Dendritic cell treated with granulocyte-macrophage colony-stimulating factor and Interleukin-4, amounts not matched to agents 40 ng/mL and 50 ng/mL, for 4 days (primary cell): ENCODE measurements at regions of chr22 and their contacts with region 1.

Region 1: DNA sequence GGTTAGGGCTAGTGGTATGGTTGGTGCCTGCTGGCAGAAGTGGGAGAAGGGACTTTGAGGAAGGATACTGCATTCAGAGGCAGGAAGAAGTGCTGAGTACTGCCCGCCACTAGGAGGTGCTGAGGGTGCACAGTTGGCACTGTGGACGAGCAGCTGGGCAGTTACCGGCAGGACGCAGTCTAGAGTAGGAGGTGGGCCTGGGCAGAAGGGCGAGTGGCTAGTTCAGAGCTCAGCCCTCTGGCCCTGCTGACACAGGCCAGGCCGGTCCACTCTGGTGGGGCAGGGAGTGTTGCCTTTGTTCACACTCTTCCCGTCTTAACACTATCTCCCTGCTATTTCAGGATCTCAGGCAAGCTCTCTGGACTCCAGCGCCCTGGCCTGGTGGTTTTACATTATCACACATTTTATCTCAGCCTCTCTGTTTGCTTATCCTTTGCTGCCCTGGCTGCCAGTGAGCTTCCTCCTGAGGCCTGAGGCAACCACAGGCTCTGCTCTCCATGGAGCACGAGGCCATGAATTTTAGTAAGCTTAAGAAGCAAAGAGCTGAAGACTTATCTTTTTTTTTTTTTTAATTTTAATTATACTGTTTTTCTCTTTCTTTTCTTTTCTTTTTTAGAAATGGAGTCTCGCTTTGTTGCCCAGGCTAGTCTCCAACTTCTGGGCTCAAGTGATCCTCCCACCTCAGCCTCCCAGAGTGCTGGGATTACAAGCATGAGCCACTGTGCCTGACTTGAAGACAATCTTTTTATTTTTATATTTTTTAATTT is 26.9 kb downstream of the SNAP29 start:
- H3K4me3 Mint-ChIP-seq: no peak overlapping the region
- H3K27ac Mint-ChIP-seq: peak overlapping the region; percentile 69
- H3K4me1 Mint-ChIP-seq: peaks cover 11% of the 10 kb centered on the region
- H3K27me3 Mint-ChIP-seq: no peaks in the 10 kb centered on the region

Region 2: DNA sequence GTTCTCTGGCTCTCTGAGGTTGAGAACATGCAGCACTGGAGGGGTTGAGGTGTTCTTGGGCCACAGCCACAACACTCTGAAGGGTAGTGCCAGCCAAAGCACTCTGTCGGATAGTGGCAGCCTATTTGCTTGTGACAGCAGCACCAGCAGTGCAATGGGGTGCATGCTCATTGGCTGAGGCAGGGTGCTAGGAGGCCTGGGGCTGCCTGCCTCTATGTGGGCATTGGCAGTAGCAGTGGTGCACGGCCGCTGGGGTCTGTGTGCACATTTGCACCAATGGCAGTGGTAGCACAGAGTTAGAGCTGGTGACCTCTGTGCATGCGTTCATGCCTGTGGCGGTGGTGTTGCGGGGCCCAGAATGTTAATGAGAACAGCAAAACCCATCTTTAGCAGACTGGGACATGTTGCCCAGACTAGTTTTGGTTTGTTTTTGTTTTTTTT is 52.5 kb before region 1 on chr22:
- intact Hi-C with region 1: no loop called
- H3K4me3 Mint-ChIP-seq: no peak overlapping the region
- H3K27ac Mint-ChIP-seq: no peak overlapping the region
- H3K4me1 Mint-ChIP-seq: peaks cover 17% of the 10 kb centered on the region
- H3K27me3 Mint-ChIP-seq: no peaks in the 10 kb centered on the region

Region 3: DNA sequence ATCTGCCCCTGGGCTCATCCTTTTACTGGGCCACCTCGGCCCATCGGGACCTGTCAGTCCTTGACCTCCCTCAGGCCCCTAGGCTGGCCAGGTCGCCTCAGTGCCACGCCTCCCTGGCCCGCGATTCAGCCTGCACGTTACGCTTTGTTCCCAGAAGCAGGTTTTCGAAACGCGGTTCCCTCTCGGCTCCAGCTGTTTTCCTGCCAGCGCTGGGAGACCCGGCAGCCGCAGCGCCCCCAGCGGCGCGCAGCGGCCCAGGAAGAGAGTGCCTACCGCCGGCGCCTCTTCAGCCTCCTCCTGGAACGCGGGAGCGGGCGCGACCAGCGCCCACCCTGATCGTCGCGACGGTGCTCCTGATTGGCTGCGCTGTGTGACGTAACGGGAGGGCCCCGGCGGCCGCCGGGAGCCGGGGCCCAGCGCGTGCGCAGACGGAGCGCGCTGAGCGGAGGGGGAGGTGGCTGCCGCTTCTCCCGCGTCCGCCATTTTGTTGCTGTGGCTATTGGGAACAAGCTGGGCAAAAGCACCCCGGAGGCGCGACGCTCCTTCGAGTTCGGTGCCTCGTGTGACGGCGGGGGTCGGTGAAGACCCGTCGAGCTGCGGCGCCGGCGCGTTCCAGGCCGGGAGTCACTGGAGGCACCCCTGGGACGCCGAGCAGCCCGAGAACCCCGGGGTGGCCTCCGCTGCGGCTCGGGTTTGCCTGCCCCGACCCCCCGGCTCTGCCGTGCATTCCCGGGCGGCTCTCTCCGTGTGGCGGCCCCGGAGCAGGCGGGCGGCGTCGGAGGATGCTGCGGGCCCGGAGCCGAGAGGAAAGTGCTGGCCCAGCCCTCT is 31.5 kb after region 1 on chr22 and contains the start of gene CRKL:
- intact Hi-C with region 1: loop called (anchors 2 kb)
- H3K4me3 Mint-ChIP-seq: peak within 1 kb of the TSS; percentile 97
- H3K27ac Mint-ChIP-seq: peak within 1 kb of the TSS; percentile 83
- H3K4me1 Mint-ChIP-seq: peaks cover 43% of the 10 kb centered on the region
- H3K27me3 Mint-ChIP-seq: no peaks in the 10 kb centered on the region

Region 4: DNA sequence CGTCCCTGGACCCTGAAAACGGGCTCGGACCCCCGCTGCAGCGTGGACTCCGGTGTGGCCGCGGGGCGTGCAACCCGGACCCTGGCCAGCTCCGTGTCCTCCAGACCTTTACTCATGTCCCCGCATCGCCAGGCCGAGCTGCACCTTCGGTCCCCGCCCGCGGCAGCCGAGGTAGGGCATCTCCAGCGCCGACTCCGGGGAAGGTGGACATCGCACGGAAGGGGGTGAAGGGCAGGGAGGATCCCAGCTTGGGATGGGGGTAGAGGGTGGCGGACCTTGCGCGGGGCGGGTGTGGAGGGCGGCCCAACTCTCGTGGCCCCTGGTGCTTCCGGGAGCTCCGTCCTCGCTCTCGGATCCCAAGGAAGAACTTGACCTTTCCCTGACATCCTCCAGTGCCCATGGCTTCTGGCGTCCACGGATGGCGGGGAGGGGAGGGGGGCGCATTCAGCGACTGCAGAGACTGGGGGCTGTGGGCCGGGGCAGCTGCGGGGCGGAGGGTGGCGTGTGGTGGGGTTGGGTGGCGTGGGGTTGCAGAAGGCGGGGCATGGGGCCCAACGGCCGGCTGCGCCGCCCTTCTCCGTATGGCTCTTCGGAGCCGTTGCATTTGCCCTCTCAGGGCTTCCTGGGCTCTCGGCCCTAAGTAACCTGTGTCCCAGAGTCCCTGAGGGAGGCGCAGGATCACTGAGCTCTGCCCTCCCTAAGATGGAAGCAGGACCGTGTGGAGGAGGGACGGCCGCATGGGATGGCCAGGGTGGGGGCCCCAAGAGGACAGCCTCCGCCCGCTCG is 71.8 kb after region 1 on chr22:
- intact Hi-C with region 1: loop called (anchors 5 kb)
- H3K4me3 Mint-ChIP-seq: peak overlapping the region; percentile 92
- H3K27ac Mint-ChIP-seq: peak overlapping the region; percentile 92
- H3K4me1 Mint-ChIP-seq: peaks cover 45% of the 10 kb centered on the region
- H3K27me3 Mint-ChIP-seq: no peaks in the 10 kb centered on the region

Region 5: DNA sequence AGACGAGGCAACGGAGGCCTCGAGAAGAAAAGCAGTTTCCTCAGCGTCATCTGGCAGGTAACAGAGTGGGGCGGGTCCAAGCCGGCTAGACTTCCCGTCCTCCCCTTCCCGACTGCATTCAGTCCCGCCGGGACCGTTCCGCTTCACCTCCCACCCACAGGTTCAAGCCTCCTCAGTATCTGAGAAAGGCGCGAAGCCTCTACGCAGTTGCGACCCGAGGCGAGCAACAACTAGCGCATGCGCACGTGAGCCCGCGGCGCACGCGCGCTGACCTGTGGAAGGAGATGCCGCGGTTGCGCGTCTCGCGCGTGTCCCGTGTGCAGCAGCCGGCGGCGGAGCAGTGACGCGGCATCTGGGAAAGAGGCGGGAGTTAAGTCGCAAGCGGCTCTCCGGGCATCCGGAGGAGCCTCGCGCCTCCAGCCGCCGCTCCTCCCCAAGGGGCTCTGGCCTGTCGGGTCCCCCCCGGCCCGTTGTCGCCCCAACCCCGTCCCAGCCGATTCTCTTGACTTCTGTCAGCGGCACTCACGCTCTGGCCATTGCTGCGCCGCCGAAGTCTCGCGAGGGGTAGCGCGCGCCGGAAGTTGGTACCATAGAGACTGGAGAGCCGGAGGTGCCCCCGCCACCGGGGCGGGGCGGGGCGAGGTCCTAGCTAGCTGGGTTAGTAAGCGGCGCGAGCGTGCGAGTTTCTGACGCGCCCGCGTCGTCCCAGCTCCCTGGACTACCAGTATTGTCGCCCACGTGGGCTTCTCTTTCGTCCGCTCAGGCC is 116.0 kb after region 1 on chr22 and contains the start of gene THAP7:
- intact Hi-C with region 1: loop called (anchors 10 kb)
- H3K4me3 Mint-ChIP-seq: peak within 1 kb of the TSS; percentile 80
- H3K27ac Mint-ChIP-seq: peak within 1 kb of the TSS; percentile 99
- H3K4me1 Mint-ChIP-seq: peaks cover 40% of the 10 kb centered on the region
- H3K27me3 Mint-ChIP-seq: peaks cover 2% of the 10 kb centered on the region

Region 6: GRCh38 chr22:21443066-21443730 is 557.5 kb after region 1 on chr22:
- intact Hi-C with region 1: no loop called
- H3K4me3 Mint-ChIP-seq: no peak overlapping the region
- H3K27ac Mint-ChIP-seq: no peak overlapping the region
- H3K4me1 Mint-ChIP-seq: no peaks in the 10 kb centered on the region
- H3K27me3 Mint-ChIP-seq: no peaks in the 10 kb centered on the region